Heart left ventricle (tissue), 16 donors: ENCODE measurements at regions of chr20 and their contacts with region 1.

Region 1: DNA sequence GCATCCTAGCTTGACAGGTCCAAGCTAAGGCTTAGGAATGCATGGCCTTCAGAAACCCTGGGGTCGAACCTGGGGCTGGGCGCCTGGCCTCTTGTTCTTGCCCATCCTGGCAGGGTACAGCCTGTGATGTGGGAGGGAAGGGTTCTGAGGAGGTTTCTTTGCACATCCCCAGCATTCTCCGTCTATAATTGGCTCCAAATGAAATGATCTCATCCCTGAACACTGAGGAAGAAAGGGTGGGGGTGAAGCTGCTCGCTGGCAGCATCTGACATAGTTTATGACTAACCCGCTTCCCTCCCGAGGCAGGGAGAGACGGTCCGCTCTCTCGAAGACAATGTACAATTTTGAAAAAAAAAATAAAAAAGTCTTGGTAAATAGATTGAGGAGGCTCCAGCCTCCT is 67.1 kb upstream of the ZNFX1 start:
- DNase-seq: peak in 4 of 5 donors; percentile 45 to 74 (median 62)
- ATAC-seq: peak; percentile 71 to 98 (median 95)
- H3K4me3 ChIP-seq: no peak overlapping the region
- H3K27ac ChIP-seq: peak overlapping the region in 7 of 12 donors; percentile 15 to 68 (median 49)
- H3K4me1 ChIP-seq: peaks cover 0 to 18% (median 11%) of the 10 kb centered on the region in 12 donors
- H3K27me3 ChIP-seq: no peaks in the 10 kb centered on the region
- CTCF ChIP-seq: no peak
- POLR2A ChIP-seq: no peak

Region 2: GRCh38 chr20:49245921-49246740 is 98.8 kb before region 1 on chr20:
- intact Hi-C with region 1: no loop called
- DNase-seq: peak in 2 of 5 donors; percentile 26 to 58
- ATAC-seq: peak; percentile 17 to 72 (median 64)
- H3K4me3 ChIP-seq: no peak overlapping the region
- H3K27ac ChIP-seq: peak overlapping the region in 2 of 12 donors; percentile 10 to 16
- H3K4me1 ChIP-seq: peaks cover 0 to 27% (median 16%) of the 10 kb centered on the region in 12 donors
- H3K27me3 ChIP-seq: no peaks in the 10 kb centered on the region
- CTCF ChIP-seq: peak; percentile 29 to 67 (median 49)
- POLR2A ChIP-seq: no peak

Region 3: DNA sequence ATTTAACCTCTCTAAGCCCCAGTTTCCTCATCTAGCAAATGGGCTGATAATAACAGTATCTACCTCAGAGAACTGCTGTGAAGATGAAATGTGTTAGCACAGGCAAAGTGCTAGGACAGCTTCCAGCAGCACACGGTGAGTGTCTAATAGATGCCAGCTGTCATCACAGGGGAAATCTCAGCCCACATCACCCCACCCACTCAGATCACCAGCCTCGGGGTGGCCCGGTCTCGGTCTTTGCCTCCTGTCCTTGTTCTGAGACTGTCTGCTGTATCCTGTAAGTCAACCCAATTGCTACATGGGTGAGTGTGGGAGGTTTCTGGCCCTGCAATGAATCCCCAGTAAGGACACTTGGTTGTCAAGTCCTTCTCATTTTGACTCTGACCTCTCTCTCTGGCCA is 32.4 kb after region 1 on chr20:
- intact Hi-C with region 1: loop called in 1 of 10 experiments (anchors 5 kb)
- DNase-seq: no peak
- ATAC-seq: no peak
- H3K4me3 ChIP-seq: no peak overlapping the region
- H3K27ac ChIP-seq: no peak overlapping the region
- H3K4me1 ChIP-seq: peaks cover 0 to 15% (median 9%) of the 10 kb centered on the region in 12 donors
- H3K27me3 ChIP-seq: no peaks in the 10 kb centered on the region
- CTCF ChIP-seq: no peak
- POLR2A ChIP-seq: no peak

Region 4: DNA sequence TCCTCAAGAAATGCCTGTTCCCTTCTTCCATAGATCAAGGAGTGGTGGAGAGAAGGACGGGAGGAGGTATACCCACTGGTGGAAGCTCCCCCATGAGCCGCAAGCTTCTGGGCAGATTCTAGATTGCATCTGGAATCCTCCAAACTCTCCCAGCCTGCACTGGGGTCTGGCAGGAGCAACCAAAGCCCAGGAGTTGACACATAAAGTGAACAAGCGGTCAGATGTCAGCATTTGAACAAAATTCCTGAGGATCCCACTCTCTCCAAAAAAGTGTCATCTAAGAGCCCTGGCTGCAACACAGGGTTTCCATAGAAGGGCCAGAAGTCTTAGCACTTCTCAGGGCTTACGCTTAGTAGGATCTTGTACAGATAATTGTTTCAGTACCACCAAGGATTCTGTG is 49.3 kb after region 1 on chr20:
- intact Hi-C with region 1: loop called in 1 of 10 experiments (anchors 2 kb)
- DNase-seq: no peak
- ATAC-seq: no peak
- H3K4me3 ChIP-seq: no peak overlapping the region
- H3K27ac ChIP-seq: peak overlapping the region in 1 of 12 donors; percentile 87
- H3K4me1 ChIP-seq: peaks cover 0 to 33% (median 13%) of the 10 kb centered on the region in 12 donors
- H3K27me3 ChIP-seq: no peaks in the 10 kb centered on the region
- CTCF ChIP-seq: no peak
- POLR2A ChIP-seq: no peak

Region 5: DNA sequence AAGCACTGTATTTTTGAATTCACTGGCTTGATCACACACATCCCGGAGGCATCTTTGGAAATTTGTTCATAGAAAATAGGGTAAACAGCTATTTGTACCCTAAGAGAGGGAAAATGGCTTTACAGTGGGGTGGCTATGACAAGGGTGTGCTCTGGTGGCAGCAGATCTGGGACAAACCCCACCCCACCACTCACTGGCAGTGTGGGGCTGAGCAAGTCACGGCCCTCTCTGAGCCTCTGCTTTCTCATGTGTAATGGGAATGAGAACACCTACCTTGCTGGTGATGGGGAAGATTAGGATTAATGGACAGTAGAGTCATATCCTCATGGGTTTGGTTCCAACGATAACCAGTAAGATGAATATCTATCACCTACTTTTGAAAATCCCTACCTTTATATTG is 59.5 kb after region 1 on chr20:
- intact Hi-C with region 1: no loop called
- DNase-seq: no peak
- ATAC-seq: no peak
- H3K4me3 ChIP-seq: no peak overlapping the region
- H3K27ac ChIP-seq: no peak overlapping the region
- H3K4me1 ChIP-seq: peaks cover 0 to 31% (median 13%) of the 10 kb centered on the region in 12 donors
- H3K27me3 ChIP-seq: peaks cover 0 to 3% (median 0%) of the 10 kb centered on the region in 9 donors
- CTCF ChIP-seq: no peak
- POLR2A ChIP-seq: no peak

Region 6: GRCh38 chr20:49508435-49509199 is 163.6 kb after region 1 on chr20:
- intact Hi-C with region 1: no loop called
- DNase-seq: no peak
- ATAC-seq: no peak
- H3K4me3 ChIP-seq: no peak overlapping the region
- H3K27ac ChIP-seq: peak overlapping the region in 1 of 12 donors; percentile 69
- H3K4me1 ChIP-seq: peaks cover 0 to 20% (median 3%) of the 10 kb centered on the region in 12 donors
- H3K27me3 ChIP-seq: peaks cover 0 to 16% (median 0%) of the 10 kb centered on the region in 9 donors
- CTCF ChIP-seq: peak; percentile 33 to 67 (median 51)
- POLR2A ChIP-seq: no peak